Activated naive CD4-positive, alpha-beta T cell treated with anti-CD3 and anti-CD28 coated beads for 36 hours (primary cell): ENCODE measurements at regions of chr4 and their contacts with region 1.

Region 1: GRCh38 chr4:101169044-101170014 is 178.0 kb downstream of the PPP3CA start:
- DNase-seq: peak; percentile 80
- H3K4me3 Mint-ChIP-seq: no peak overlapping the region
- H3K27ac Mint-ChIP-seq: no peak overlapping the region
- H3K4me1 Mint-ChIP-seq: peaks cover 4% of the 10 kb centered on the region
- H3K27me3 Mint-ChIP-seq: no peaks in the 10 kb centered on the region

Region 2: GRCh38 chr4:101187841-101188240 is 18.5 kb after region 1 on chr4:
- CTCF ChIA-PET with region 1: interaction called, 10 read pairs
- intact Hi-C with region 1: no loop called
- DNase-seq: no peak
- H3K4me3 Mint-ChIP-seq: no peak overlapping the region
- H3K27ac Mint-ChIP-seq: no peak overlapping the region
- H3K4me1 Mint-ChIP-seq: peaks cover 6% of the 10 kb centered on the region
- H3K27me3 Mint-ChIP-seq: no peaks in the 10 kb centered on the region

Region 3: GRCh38 chr4:101259876-101260275 is 90.5 kb after region 1 on chr4:
- CTCF ChIA-PET with region 1: no interaction called
- intact Hi-C with region 1: no loop called
- DNase-seq: no peak
- H3K4me3 Mint-ChIP-seq: no peak overlapping the region
- H3K27ac Mint-ChIP-seq: no peak overlapping the region
- H3K4me1 Mint-ChIP-seq: peaks cover 32% of the 10 kb centered on the region
- H3K27me3 Mint-ChIP-seq: no peaks in the 10 kb centered on the region

Region 4: DNA sequence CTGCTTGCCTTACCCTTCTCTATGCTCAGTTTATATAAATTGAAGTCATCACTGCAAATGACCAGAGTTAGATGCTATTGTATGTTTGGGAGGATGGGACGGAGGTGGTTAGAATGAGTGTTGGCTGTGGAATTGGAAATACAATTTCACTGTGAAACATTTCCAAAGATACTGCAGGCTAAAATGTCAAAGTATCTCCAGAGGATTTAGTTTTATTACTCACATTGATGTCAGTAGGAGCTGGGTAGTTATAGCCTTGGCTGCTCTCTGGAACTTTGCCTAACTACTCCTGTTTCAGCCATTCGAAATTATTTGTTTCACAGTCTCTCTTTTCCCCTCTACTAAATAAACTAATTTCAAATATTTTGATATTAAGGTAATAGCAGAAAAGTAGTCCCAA is 270.6 kb after region 1 on chr4:
- CTCF ChIA-PET with region 1: interaction called, 6 read pairs
- intact Hi-C with region 1: loop called (anchors 5 kb)
- DNase-seq: no peak
- H3K4me3 Mint-ChIP-seq: no peak overlapping the region
- H3K27ac Mint-ChIP-seq: no peak overlapping the region
- H3K4me1 Mint-ChIP-seq: no peaks in the 10 kb centered on the region
- H3K27me3 Mint-ChIP-seq: peaks cover 19% of the 10 kb centered on the region

Region 5: GRCh38 chr4:101596781-101597552 is 427.6 kb after region 1 on chr4:
- CTCF ChIA-PET with region 1: interaction called, 4 read pairs
- intact Hi-C with region 1: loop called (anchors 1 kb)
- DNase-seq: peak; percentile 33
- H3K4me3 Mint-ChIP-seq: no peak overlapping the region
- H3K27ac Mint-ChIP-seq: no peak overlapping the region
- H3K4me1 Mint-ChIP-seq: no peaks in the 10 kb centered on the region
- H3K27me3 Mint-ChIP-seq: peaks cover 1% of the 10 kb centered on the region

Region 6: DNA sequence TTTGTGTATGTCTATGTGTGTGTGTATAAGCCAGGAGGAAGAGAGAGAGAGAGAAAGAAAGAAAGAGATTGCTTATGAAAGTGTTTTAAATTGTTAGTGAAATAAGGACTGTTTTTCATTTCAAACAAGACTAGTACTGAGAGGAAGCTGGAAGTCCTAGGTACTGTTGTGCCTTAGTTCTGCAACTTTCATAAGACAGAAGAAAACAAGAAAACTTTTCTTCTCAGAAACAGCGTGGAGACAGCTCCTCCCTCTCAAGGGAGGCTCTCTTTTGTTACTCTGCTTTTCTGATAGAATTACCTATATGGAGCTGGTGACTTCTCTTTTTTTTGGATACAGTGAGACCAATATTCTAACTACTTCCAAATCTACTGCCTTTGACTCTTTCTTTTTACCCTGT is 683.7 kb after region 1 on chr4:
- CTCF ChIA-PET with region 1: no interaction called
- intact Hi-C with region 1: loop called (anchors 10 kb)
- DNase-seq: no peak
- H3K4me3 Mint-ChIP-seq: no peak overlapping the region
- H3K27ac Mint-ChIP-seq: no peak overlapping the region
- H3K4me1 Mint-ChIP-seq: no peaks in the 10 kb centered on the region
- H3K27me3 Mint-ChIP-seq: peaks cover 5% of the 10 kb centered on the region

Region 7: DNA sequence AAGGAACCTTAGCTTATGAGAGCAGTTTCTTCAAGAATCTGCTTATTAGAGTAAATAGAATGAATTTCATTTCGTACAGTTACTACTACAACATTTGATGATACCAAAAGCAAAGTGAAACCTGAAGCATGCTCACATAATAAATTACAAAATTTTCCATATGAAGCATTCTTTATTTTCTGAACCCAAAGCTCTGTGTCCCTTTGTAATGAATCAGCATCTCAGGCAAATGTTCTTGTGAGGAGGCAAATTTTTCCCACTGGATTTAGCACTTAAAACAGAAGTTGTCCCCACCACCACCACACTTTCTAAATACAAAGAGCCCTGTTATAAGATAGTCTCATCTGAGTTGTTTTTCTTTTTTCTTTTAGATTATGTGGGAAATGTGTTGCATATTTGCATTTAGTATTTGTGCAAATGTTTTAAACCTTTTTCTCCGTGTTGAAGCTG is 1261.2 kb after region 1 on chr4:
- CTCF ChIA-PET with region 1: no interaction called
- intact Hi-C with region 1: loop called (anchors 5 kb)
- DNase-seq: no peak
- H3K4me3 Mint-ChIP-seq: peak overlapping the region; percentile 82
- H3K27ac Mint-ChIP-seq: peak overlapping the region; percentile 81
- H3K4me1 Mint-ChIP-seq: peaks cover 8% of the 10 kb centered on the region
- H3K27me3 Mint-ChIP-seq: peaks cover 5% of the 10 kb centered on the region